Ascending aorta (tissue), 2 donors: ENCODE measurements at regions of chr12 and their contacts with region 1.

Region 1: GRCh38 chr12:6195665-6196535 is 4.3 kb upstream of the CD9 start:
- DNase-seq: peak; percentile 71 to 95
- H3K4me3 ChIP-seq: no peak overlapping the region
- H3K27ac ChIP-seq: peak overlapping the region; percentile 42 to 53
- H3K4me1 ChIP-seq: peaks cover 0 to 13% of the 10 kb centered on the region in 2 donors
- H3K27me3 ChIP-seq: no peaks in the 10 kb centered on the region
- CTCF ChIP-seq: peak; percentile 83 to 98 (median 97)

Region 2: DNA sequence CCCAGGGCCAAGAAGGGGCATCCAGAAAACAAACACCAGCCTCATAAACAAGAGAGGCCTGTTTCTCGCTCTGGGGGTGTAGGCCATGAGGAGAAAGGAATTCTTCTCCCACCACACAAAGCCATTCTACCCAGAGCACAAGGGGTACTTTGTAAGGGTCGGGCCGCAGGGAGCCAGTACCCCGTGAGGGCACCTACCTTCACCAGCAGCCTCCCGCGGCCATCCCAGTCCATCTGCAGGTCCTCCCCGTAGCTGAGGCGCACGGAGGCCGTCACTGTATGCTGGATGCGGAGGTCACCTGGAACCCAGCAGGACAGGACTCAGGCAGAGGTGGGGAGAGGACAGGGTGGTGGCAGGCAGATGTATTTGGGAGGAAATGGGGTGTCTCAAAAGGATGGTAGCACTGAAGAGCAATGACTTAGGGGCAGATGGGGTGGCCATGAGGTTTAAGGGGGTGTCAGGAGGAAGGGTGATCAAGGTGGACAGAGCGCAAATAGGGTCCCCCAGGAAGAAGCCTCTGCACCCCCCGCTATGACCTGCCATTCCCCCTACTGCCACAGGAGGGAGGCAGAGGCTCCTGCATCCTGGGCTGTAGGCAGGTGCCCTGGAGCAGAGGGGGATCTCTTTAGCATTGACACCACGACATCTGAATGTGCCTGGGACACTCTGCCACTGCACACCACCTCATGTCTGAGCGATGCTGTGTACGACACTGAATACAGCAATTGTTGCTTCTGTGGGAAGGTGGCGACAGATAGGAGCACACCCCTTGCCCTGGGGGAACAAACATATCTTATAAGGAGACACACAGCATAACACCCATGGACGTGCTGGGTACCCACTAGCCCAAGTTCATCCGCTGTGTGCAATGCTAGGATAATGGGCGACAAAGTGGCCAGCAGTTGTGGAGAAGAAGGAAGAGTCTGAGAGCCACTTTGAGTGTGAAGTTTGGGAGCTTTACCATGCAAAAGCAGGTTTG is 132.9 kb before region 1 on chr12:
- intact Hi-C with region 1: loop called (anchors 5 kb)
- DNase-seq: no peak
- H3K4me3 ChIP-seq: no peak overlapping the region
- H3K27ac ChIP-seq: no peak overlapping the region
- H3K4me1 ChIP-seq: peaks cover 0 to 3% of the 10 kb centered on the region in 2 donors
- H3K27me3 ChIP-seq: no peaks in the 10 kb centered on the region
- CTCF ChIP-seq: peak; percentile 89 to 95 (median 94)

Region 3: GRCh38 chr12:6167327-6168259 is 28.3 kb before region 1 on chr12:
- intact Hi-C with region 1: loop called (anchors 1 kb)
- DNase-seq: peak; percentile 75 to 95
- H3K4me3 ChIP-seq: no peak overlapping the region
- H3K27ac ChIP-seq: peak overlapping the region; percentile 93 to 98
- H3K4me1 ChIP-seq: peaks cover 9 to 31% of the 10 kb centered on the region in 2 donors
- H3K27me3 ChIP-seq: no peaks in the 10 kb centered on the region
- CTCF ChIP-seq: no peak

Region 4: DNA sequence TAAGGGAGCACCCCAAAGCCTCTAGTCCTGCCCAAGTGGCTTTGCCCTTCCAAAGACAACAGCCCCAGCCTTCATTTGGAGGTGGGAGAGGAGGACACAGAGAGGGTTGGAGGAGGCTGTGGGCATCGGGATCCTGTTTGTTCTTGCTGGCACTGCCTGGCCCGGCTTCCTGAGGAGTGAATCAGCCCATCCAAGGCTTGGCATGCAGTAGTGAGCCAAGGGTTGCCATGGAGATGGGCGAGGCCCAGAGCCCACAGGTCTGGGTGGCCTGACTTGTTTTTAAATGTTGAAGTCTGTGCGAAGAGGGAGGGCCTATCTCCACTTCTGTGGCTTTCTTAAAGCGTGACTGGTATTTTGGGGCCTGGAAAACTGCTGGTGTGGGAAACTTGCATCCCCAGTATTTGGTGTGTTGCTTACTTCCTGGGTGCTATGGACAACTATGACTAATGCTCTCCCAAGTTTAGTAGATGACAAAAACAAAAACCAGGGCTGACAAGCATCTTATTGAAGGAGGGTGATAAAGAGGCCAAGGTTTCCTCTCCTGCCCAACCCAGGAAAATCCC is 20.1 kb after region 1 on chr12:
- intact Hi-C with region 1: loop called (anchors 2 kb)
- DNase-seq: peak; percentile 84 to 97
- H3K4me3 ChIP-seq: peak overlapping the region; percentile 25 to 32
- H3K27ac ChIP-seq: peak overlapping the region; percentile 93 to 94
- H3K4me1 ChIP-seq: peaks cover 30 to 89% of the 10 kb centered on the region in 2 donors
- H3K27me3 ChIP-seq: no peaks in the 10 kb centered on the region
- CTCF ChIP-seq: no peak

Region 5: DNA sequence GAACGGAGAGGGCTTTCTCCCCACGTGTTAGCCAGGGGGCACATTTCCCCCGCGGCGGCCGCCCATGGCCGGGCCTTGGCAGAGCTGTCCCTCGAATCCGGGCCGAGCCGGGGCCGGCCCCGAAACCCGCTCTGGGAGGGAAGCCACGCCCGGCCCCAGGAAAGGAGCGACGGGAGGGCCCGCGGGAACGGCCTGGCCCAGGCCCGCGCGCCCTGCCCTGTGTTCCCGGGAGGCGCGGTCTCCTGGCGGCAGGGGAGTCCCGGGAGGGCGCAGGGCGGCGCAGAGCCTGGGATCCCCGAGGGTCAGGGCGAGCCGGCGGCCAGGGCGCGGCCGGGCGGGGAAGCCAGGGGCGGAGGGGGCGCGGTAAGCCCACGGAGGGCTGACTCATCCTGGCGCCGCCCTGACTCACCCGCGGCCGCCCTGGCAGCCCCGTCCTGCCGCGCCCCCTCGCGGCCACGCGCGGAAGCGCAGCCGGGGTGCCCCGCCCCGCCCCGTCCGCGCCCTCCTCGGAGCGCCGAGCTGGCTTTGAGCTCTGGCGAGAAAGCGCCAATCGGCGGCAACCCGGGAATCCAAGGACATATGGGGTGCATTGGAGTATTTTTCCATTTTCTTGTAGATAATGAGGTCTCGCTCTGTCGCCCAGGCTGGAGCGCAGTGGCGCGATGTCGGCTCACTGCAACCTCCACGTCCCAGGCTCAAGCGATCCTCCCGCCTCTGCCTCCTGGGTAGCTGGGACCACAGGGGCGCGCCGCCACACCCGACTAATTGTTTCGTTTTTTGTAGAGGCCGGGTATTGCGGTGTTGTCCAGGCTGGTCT is 82.7 kb after region 1 on chr12:
- intact Hi-C with region 1: loop called (anchors 1 kb)
- DNase-seq: peak; percentile 49 to 93
- H3K4me3 ChIP-seq: peak overlapping the region; percentile 59 to 63
- H3K27ac ChIP-seq: peak overlapping the region; percentile 82 to 85
- H3K4me1 ChIP-seq: peaks cover 8 to 23% of the 10 kb centered on the region in 2 donors
- H3K27me3 ChIP-seq: no peaks in the 10 kb centered on the region
- CTCF ChIP-seq: peak; percentile 53 to 100 (median 64)